Left ventricle myocardium superior (tissue), 1 donor: ENCODE measurements at regions of chr5 and their contacts with region 1.

Region 1: DNA sequence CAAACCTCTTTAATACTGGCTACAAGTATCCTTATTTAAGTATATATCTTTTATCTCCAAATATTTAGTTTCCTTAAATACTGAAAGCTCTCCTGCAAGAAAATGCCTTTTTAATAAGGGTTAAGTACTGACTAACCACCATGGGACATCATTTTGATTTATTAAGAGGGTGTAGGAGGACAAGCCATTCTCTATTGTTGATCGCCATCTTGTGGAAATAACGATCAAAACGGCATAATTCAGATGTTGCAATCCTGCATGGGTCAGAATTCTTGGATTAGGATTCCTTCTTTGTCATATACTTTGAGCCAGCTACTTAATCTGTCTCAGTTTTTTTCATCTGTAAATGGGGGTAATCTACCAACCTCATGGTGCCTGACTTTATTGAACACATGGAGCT is 28.7 kb upstream of the C5orf46 start:
- DNase-seq: no peak
- ATAC-seq: peak; percentile 71

Region 2: DNA sequence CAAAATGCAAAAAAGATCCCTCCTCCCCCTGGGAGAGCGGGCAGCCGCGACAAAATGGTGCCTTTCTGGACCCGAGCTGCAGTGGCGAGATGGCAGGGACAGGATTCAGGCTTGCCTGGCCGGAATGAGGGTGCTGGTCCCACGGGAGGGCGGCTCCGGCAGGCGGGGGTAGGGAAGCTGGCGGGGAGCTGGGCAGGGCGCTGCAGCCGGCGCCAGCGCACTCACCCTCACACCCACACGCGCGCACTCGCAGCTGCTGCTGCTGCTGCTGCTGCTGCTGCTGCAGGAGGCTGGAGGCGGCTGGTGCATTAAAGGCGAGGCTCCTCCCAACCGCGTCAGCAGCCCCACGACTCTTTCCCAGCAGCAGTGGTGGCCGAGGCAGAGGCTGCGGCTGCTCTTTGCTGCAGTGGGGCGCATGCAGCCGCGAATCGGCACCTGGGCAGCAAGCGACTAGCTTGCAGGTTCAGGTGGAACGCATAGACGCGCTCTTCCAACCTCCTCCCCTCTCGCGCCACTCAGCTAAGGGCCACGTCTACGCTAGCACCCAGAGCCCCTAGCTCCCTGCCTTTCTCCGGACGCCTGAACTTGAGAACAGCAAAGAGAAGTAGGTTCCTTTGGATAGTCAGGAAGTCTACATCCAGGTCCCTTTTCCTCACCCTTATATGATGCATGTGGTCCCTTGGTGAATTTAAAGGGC is 1056.4 kb before region 1 on chr5 and contains the start of gene PPP2R2B:
- intact Hi-C with region 1: no loop called
- DNase-seq: peak; percentile 40
- ATAC-seq: peak; percentile 57
- total RNA-seq, gene PPP2R2B: 0.12 TPM

Region 3: DNA sequence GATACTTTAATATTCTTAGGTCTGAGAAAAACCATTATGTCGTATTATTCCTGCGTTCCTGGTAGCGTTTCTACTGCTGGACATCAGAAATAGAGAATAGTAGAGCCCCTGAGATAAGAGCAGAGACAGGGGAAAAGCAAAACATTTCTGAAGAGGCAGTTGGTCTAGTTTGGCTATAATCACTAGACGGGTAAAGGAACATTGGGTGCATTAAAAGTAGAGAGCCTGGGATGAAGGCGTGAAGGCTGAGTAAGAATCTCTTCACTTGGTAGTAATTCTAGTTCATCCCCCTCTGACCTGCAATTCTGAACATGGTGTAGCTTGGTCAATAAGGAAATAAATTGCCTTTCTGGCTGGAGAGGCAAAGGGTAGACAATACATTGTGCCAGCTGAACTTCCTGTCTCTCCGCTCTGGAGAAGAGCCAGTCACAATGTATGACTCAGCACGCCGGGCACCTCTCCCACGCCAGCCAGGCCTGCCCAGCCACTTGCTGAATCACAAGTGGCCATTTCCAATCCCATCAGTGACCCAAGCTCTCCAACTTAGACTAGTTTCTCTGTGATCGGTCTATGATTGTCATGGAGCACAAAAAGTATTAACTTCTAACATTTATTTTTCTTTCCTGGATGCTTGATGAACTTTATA is 624.9 kb before region 1 on chr5:
- intact Hi-C with region 1: no loop called
- DNase-seq: peak; percentile 32
- ATAC-seq: peak; percentile 45

Region 4: DNA sequence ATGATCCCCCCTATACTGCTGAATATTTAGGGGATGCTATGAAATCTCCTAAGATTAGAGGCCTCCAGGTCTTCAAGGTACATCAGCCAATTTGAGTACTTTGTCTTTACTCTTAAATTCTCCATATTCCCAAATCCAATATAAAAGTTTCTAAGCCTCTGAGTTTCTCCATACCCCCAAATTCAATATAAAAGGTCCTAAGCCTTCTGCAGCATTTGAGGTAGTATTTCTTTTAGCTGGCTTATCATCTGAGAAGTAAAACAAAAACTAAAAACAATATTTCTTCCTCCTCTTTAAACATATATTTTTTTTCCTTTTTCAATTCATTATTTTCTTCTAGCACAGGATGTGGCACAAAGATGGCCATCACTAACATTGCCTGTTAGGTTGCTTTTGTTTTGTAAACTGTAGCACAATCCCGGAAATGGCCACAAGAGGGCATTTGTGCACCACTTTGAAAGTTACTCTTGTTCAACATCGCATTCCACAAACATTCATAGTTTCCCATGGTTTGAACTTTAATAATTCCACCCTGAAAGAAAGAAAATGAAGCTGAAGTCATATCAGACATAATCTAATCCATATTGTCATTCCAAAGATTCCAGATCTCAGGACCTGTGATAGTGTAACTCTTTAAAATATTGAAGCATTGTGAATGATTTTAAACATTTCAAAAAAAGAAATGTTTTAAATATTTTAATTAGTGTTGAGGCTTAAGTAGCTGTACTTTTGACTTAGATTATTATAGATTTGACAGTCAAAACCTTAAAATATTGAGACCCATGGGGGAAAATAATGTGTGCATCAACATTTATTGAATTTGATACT is 77.5 kb before region 1 on chr5:
- intact Hi-C with region 1: loop called (anchors 10 kb)
- DNase-seq: peak; percentile 32
- ATAC-seq: peak; percentile 37

Region 5: DNA sequence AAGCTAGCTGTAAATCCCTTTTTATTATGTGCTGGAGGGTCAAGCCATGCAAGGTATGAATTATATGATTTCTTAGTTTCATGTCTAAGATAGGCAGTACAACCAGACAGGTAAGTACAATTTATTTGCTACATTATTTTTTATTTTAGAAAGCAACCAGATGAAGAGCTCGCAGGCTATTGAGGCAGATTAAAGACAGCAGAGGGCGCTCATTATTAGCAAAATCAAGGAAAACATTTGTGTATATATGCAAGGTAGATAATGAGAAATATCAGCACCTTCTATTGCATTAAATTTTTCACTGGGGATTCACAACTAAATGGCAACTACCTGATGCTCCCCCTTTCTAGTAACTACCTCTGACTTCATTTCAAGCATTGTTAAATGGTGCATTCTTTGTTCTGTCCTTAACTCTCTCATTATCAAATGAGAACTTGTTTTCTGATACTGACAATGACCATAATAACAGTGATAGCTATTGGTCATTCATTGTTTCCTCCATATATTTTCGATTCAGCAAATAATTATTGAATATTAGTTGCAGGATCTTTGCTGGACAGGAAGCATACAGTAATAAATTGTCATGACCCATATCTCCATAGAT is 47.9 kb before region 1 on chr5:
- intact Hi-C with region 1: loop called (anchors 5 kb)
- DNase-seq: no peak
- ATAC-seq: peak; percentile 24